IMR-90 (cell line): ENCODE measurements at regions of chr12 and their contacts with region 1.

Region 1: DNA sequence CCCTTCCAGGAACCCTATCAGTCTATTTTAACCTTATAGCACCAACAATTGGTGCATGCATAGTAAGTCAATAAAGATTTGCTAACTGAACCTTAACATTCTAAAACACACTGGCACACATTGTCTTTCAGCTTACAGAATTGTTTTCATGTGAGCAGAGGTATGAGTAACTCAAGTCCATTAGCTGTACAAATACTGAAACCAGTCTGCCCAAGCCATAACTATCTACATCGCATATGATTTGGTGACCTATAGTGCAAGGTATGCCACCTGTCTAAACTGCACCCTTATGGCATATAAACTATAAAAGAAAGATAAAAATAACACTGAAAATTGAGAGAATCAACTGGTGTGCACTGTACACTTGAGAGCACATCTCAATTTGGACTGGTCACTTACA is 34.8 kb downstream of the SBNO1 start:
- DNase-seq: no peak
- ATAC-seq: no peak
- H3K4me3 ChIP-seq: no peak overlapping the region
- H3K27ac ChIP-seq: no peak overlapping the region
- H3K4me1 ChIP-seq: no peaks in the 10 kb centered on the region
- H3K27me3 ChIP-seq: no peaks in the 10 kb centered on the region
- CTCF ChIP-seq: no peak
- POLR2A ChIP-seq: no peak
- RAD21 ChIP-seq: no peak

Region 2: GRCh38 chr12:123282111-123282510 is 47.7 kb before region 1 on chr12:
- CTCF ChIA-PET with region 1: no interaction called
- POLR2A ChIA-PET with region 1: no interaction called
- dilution Hi-C with region 1: no loop called
- in situ Hi-C with region 1: no loop called
- intact Hi-C with region 1: no loop called
- DNase-seq: no peak
- ATAC-seq: no peak
- H3K4me3 ChIP-seq: no peak overlapping the region
- H3K27ac ChIP-seq: no peak overlapping the region
- H3K4me1 ChIP-seq: no peaks in the 10 kb centered on the region
- H3K27me3 ChIP-seq: no peaks in the 10 kb centered on the region
- CTCF ChIP-seq: no peak
- POLR2A ChIP-seq: no peak
- RAD21 ChIP-seq: no peak

Region 3: GRCh38 chr12:123293178-123293760 is 36.5 kb before region 1 on chr12:
- CTCF ChIA-PET with region 1: no interaction called
- POLR2A ChIA-PET with region 1: no interaction called
- dilution Hi-C with region 1: no loop called
- in situ Hi-C with region 1: no loop called
- intact Hi-C with region 1: loop called (anchors 5 kb)
- DNase-seq: no peak
- ATAC-seq: no peak
- H3K4me3 ChIP-seq: no peak overlapping the region
- H3K27ac ChIP-seq: no peak overlapping the region
- H3K4me1 ChIP-seq: no peaks in the 10 kb centered on the region
- H3K27me3 ChIP-seq: no peaks in the 10 kb centered on the region
- CTCF ChIP-seq: no peak
- POLR2A ChIP-seq: no peak
- RAD21 ChIP-seq: no peak

Region 4: DNA sequence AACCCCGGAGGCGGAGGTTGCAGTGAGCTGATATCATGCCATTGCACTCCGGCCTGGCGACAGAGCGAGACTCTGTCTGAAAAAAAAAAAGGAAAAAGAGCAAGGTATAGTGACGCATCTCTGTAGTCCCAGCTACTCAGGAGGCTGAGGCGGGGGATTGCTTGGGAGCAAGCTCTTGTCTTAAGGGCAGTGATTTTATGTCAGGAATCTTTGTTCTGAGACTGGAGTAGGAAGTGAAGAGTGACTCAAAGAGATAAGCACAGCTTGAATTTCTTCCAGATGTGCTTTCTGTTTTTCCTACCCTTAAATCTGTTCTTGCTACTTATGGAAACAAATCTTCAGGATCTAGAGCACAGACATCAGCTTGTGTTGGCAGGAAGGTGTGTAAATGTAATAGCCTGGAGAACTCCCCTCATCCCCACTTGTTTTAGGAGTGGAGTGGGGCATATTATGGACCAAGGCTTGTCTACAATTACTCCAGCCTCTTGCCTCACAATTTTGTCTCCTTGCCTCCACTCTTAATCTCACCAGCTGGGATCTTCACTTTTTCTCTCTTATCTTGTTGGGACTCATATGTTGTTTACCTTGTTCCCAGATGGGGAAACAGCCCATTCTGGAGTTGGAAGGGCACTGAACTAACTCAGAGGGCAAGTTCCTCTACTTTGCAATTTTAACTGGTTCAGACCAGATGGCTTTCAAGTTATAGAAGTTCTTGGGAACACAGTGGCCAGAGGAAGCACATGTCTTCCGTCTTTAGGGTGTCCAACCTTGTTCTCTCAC is 262.1 kb after region 1 on chr12:
- CTCF ChIA-PET with region 1: no interaction called
- POLR2A ChIA-PET with region 1: no interaction called
- dilution Hi-C with region 1: no loop called
- in situ Hi-C with region 1: no loop called
- intact Hi-C with region 1: no loop called
- DNase-seq: peak; percentile 91
- ATAC-seq: peak; percentile 80
- H3K4me3 ChIP-seq: no peak overlapping the region
- H3K27ac ChIP-seq: peak overlapping the region; percentile 44; the same call in 1 of the 2 replicates
- H3K4me1 ChIP-seq: no peaks in the 10 kb centered on the region; the same call in 1 of the 2 replicates
- H3K27me3 ChIP-seq: no peaks in the 10 kb centered on the region
- CTCF ChIP-seq: no peak
- POLR2A ChIP-seq: no peak
- RAD21 ChIP-seq: no peak

Region 5: GRCh38 chr12:123713398-123713797 is 383.6 kb after region 1 on chr12:
- CTCF ChIA-PET with region 1: no interaction called
- POLR2A ChIA-PET with region 1: no interaction called
- dilution Hi-C with region 1: no loop called
- in situ Hi-C with region 1: no loop called
- intact Hi-C with region 1: no loop called
- DNase-seq: peak; percentile 10
- ATAC-seq: no peak
- H3K4me3 ChIP-seq: peak overlapping the region; percentile 93
- H3K27ac ChIP-seq: no peak overlapping the region
- H3K4me1 ChIP-seq: peaks cover 5% of the 10 kb centered on the region
- H3K27me3 ChIP-seq: no peaks in the 10 kb centered on the region
- CTCF ChIP-seq: no peak
- POLR2A ChIP-seq: no peak
- RAD21 ChIP-seq: no peak

Region 6: GRCh38 chr12:124109751-124110150 is 780.0 kb after region 1 on chr12:
- CTCF ChIA-PET with region 1: no interaction called
- POLR2A ChIA-PET with region 1: no interaction called
- dilution Hi-C with region 1: no loop called
- in situ Hi-C with region 1: no loop called
- intact Hi-C with region 1: no loop called
- DNase-seq: peak; percentile 5
- ATAC-seq: peak; percentile 53
- H3K4me3 ChIP-seq: no peak overlapping the region
- H3K27ac ChIP-seq: no peak overlapping the region
- H3K4me1 ChIP-seq: no peaks in the 10 kb centered on the region
- H3K27me3 ChIP-seq: peaks cover 2% of the 10 kb centered on the region; the same call in 1 of the 2 replicates
- CTCF ChIP-seq: no peak
- POLR2A ChIP-seq: no peak
- RAD21 ChIP-seq: no peak